Caco-2 (cell line): ENCODE measurements at regions of chr11 and their contacts with region 1.

Region 1: DNA sequence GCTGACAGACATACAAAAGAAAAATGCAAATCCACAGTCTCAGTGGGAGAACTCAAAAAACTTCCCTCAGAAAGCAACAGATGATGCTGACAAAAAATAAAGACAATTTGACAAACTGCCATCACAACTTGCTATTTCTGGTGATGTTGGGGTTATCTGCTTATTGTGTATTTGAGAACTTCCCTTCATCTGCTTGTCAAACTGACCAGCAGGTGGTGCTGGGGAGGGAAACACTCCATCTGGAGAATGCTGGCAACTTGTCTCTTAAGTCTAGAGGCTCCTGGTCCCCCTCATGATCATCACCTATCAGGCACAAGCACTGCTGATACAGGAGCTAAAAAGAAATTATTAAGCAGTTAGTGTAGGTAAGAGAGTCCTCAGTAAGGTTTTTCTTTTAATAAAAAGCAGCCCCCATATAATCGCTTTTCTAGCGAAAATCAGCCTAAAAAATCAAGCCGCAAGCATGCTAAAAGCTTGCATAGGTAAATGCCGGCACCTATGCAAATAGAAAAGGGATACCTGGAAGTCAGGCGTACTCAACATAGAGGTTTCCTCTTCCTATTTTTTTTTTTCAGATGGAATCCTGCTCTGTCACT is 9.8 kb upstream of the FAM111B start:
- DNase-seq: peak; percentile 64 to 79
- H3K4me3 ChIP-seq: no peak overlapping the region
- H3K4me3 Mint-ChIP-seq: no peak overlapping the region
- H3K27ac Mint-ChIP-seq: no peak overlapping the region
- H3K4me1 ChIP-seq: no peaks in the 10 kb centered on the region
- H3K4me1 Mint-ChIP-seq: no peaks in the 10 kb centered on the region
- H3K27me3 ChIP-seq: no peaks in the 10 kb centered on the region
- H3K27me3 Mint-ChIP-seq: peaks cover 10% of the 10 kb centered on the region
- CTCF ChIP-seq: peak; percentile 79 to 82

Region 2: DNA sequence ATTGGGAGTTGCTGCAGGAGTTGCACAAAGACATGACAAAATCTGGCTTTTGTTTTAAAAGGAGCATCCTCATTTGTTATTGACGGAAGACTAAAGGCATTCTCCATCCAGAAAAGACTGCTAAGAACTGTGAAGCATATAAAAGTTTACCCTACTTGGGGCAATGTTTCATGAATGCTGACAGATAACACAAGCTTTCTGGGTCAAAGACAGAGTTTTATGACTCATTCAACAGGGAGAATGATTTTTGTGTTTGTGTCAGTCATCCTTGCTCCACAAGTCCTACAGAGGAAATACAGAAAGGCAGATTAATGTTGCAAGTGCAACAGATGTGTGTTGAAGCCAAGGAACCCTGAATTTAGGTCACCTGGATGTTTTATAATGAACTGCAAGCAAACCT is 155.4 kb before region 1 on chr11:
- CTCF ChIA-PET with region 1: no interaction called
- POLR2A ChIA-PET with region 1: no interaction called
- intact Hi-C with region 1: no loop called
- DNase-seq: no peak
- H3K4me3 ChIP-seq: no peak overlapping the region
- H3K4me3 Mint-ChIP-seq: no peak overlapping the region
- H3K27ac Mint-ChIP-seq: no peak overlapping the region
- H3K4me1 ChIP-seq: peaks cover 15% of the 10 kb centered on the region; the same call in 1 of the 2 replicates
- H3K4me1 Mint-ChIP-seq: peaks cover 10% of the 10 kb centered on the region
- H3K27me3 ChIP-seq: no peaks in the 10 kb centered on the region
- H3K27me3 Mint-ChIP-seq: no peaks in the 10 kb centered on the region
- CTCF ChIP-seq: no peak

Region 3: GRCh38 chr11:59076876-59077571 is 20.2 kb before region 1 on chr11:
- CTCF ChIA-PET with region 1: no interaction called
- POLR2A ChIA-PET with region 1: no interaction called
- intact Hi-C with region 1: loop called (anchors 1 kb)
- DNase-seq: no peak
- H3K4me3 ChIP-seq: no peak overlapping the region
- H3K4me3 Mint-ChIP-seq: no peak overlapping the region
- H3K27ac Mint-ChIP-seq: no peak overlapping the region
- H3K4me1 ChIP-seq: no peaks in the 10 kb centered on the region
- H3K4me1 Mint-ChIP-seq: no peaks in the 10 kb centered on the region
- H3K27me3 ChIP-seq: no peaks in the 10 kb centered on the region
- H3K27me3 Mint-ChIP-seq: peaks cover 6% of the 10 kb centered on the region
- CTCF ChIP-seq: no peak

Region 4: GRCh38 chr11:59135648-59136461 is 38.6 kb after region 1 on chr11:
- CTCF ChIA-PET with region 1: no interaction called
- POLR2A ChIA-PET with region 1: no interaction called
- intact Hi-C with region 1: loop called (anchors 1 kb)
- DNase-seq: peak; percentile 53 to 77
- H3K4me3 ChIP-seq: no peak overlapping the region
- H3K4me3 Mint-ChIP-seq: no peak overlapping the region
- H3K27ac Mint-ChIP-seq: no peak overlapping the region
- H3K4me1 ChIP-seq: no peaks in the 10 kb centered on the region
- H3K4me1 Mint-ChIP-seq: peaks cover 1% of the 10 kb centered on the region
- H3K27me3 ChIP-seq: no peaks in the 10 kb centered on the region
- H3K27me3 Mint-ChIP-seq: no peaks in the 10 kb centered on the region
- CTCF ChIP-seq: peak; percentile 79 to 88